CD8-positive, alpha-beta memory T cell (primary cell): ENCODE measurements at regions of chr17 and their contacts with region 1.

Region 1: DNA sequence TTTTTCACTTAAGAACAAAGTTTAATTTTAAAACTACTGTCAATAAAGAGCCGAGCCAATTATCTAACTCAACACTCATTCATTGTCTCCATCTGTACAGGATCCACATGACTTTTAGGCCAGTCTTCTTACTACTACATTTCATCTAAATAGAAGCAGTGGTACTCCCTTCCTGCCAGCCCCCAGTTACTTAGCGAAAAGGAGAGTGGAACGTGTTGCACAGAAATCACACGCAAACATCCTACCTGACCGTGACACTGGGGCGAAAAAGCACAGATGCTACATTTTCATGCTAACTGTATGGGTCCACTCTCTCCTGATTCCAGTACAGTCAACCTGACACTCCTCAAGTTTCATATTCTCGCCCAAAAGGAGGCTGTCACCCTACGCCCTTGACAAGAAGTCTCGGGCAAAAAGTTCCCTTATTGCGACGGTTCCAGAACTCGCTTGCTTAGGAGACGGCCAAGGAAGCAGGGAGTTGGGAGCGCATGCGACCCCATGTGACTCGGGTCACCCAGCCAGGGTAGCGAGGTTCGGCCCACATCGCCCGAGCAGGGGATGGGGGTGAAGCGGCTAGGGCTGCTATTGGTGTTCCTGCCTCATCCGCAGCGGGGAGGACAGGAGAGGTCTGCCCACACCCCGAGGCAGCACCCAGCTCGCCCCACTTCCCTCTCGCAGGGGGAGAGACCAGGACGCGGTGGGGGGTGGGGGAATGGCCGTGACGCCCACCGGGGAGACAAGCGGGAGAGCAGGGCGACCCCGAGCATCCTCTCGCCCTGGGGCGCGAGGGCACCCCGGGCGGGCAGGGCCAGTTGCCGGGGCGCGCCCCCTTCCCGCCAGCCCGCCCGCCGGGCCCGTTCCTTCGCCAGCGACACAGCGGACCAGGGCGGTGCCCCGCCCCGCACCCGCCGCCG is 935 bp downstream of the GNA13 start:
- DNase-seq: peak; percentile 29 to 68 (median 44)
- H3K4me3 ChIP-seq: peak overlapping the region; percentile 85
- H3K4me3 Mint-ChIP-seq: peak overlapping the region; percentile 94 to 99 (median 98)
- H3K27ac ChIP-seq: peak overlapping the region; percentile 90
- H3K27ac Mint-ChIP-seq: peak overlapping the region; percentile 92 to 100 (median 97)
- H3K4me1 ChIP-seq: peaks cover 31% of the 10 kb centered on the region
- H3K4me1 Mint-ChIP-seq: peaks cover 46 to 59% (median 56%) of the 10 kb centered on the region in 3 donors
- H3K27me3 ChIP-seq: no peaks in the 10 kb centered on the region
- H3K27me3 Mint-ChIP-seq: peaks cover 0 to 2% of the 10 kb centered on the region in 2 donors

Region 2: GRCh38 chr17:64975329-64976087 is 80.1 kb before region 1 on chr17:
- CTCF ChIA-PET with region 1: interaction called, 9 read pairs
- POLR2A ChIA-PET with region 1: interaction called, 29 read pairs
- DNase-seq: peak; percentile 96 to 99 (median 98)
- H3K4me3 ChIP-seq: peak overlapping the region; percentile 82
- H3K4me3 Mint-ChIP-seq: peak overlapping the region; percentile 86 to 96 (median 92)
- H3K27ac ChIP-seq: peak overlapping the region; percentile 96
- H3K27ac Mint-ChIP-seq: peak overlapping the region; percentile 97 to 100 (median 100)
- H3K4me1 ChIP-seq: peaks cover 23% of the 10 kb centered on the region
- H3K4me1 Mint-ChIP-seq: peaks cover 35 to 65% (median 56%) of the 10 kb centered on the region in 3 donors
- H3K27me3 ChIP-seq: no peaks in the 10 kb centered on the region
- H3K27me3 Mint-ChIP-seq: peaks cover 0 to 4% of the 10 kb centered on the region in 2 donors

Region 3: DNA sequence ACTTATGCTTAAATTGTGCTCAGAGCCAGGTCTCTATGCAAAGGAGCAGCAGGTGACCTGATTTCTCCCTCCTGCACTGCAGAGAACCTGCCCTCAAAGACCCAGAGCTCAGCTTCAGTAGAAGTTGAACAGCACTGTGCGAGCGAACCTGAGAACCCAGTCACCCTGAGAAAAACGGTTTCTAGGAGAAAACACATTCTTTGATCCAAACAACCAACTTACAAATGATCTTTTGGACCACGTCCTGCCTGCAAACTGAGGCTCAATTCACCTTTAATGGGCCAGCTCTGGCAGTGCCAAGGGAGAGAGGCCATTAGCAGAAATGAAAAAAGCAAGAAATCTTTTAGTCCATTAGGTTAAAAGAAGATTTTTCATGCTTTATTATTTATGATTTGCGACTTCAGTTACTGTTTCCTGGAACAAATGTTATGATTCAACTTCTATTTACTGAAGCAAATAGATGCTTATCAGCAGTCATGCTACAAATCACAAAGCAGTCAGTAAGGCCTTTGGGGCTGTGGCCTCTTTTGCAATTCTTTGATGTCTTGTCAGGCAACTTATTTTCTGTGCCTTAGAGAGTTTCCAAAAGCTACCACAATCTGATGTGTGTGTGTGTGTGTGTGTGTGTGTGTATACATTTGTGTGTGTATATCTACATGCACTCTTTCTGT is 70.6 kb before region 1 on chr17:
- CTCF ChIA-PET with region 1: no interaction called
- POLR2A ChIA-PET with region 1: interaction called, 14 read pairs
- DNase-seq: peak; percentile 32 to 82 (median 64)
- H3K4me3 ChIP-seq: peak overlapping the region; percentile 60
- H3K4me3 Mint-ChIP-seq: peak overlapping the region; percentile 39 to 89 (median 80)
- H3K27ac ChIP-seq: peak overlapping the region; percentile 95
- H3K27ac Mint-ChIP-seq: peak overlapping the region; percentile 98 to 100 (median 99)
- H3K4me1 ChIP-seq: peaks cover 39% of the 10 kb centered on the region
- H3K4me1 Mint-ChIP-seq: peaks cover 34 to 48% (median 43%) of the 10 kb centered on the region in 3 donors
- H3K27me3 ChIP-seq: no peaks in the 10 kb centered on the region
- H3K27me3 Mint-ChIP-seq: peaks cover 0 to 1% of the 10 kb centered on the region in 2 donors

Region 4: DNA sequence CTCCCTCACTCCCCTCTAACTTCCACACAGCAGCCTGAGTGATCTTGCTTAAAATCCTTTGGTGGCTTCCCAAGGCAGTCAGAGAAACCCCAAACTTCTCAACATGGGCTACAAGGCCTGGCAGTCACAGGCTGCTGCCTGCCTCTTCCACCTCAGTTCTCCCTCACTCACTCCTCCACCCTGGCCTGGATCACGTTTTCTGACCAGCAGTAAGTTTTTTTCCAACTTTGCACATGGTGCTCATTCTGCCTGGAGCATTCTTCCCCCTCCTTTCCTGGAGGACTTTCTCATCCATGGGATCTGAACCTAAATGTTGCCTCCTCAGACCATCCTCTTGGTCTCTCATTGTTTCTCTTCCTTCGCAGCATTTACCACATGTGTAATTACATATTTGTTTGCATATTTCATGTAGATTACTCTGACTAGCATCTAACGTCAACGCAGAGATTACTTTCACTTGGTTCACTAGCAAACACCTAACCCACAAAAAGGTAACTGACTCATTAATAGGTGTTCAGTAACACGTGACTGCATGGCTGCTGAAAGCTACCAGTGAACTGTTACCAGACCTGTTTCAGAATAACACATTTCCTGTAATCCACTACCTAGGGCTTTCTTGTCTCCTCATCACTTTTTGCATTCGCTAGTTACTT is 16.1 kb before region 1 on chr17:
- CTCF ChIA-PET with region 1: interaction called, 6 read pairs
- POLR2A ChIA-PET with region 1: interaction called, 20 read pairs
- DNase-seq: peak in 4 of 5 donors; percentile 50 to 82 (median 78)
- H3K4me3 ChIP-seq: peak overlapping the region; percentile 42
- H3K4me3 Mint-ChIP-seq: peak overlapping the region; percentile 31 to 88 (median 75)
- H3K27ac ChIP-seq: peak overlapping the region; percentile 49
- H3K27ac Mint-ChIP-seq: peak overlapping the region; percentile 87 to 99 (median 94)
- H3K4me1 ChIP-seq: peaks cover 91% of the 10 kb centered on the region
- H3K4me1 Mint-ChIP-seq: peaks cover 80 to 91% (median 90%) of the 10 kb centered on the region in 3 donors
- H3K27me3 ChIP-seq: no peaks in the 10 kb centered on the region
- H3K27me3 Mint-ChIP-seq: peaks cover 0 to 3% of the 10 kb centered on the region in 2 donors

Region 5: DNA sequence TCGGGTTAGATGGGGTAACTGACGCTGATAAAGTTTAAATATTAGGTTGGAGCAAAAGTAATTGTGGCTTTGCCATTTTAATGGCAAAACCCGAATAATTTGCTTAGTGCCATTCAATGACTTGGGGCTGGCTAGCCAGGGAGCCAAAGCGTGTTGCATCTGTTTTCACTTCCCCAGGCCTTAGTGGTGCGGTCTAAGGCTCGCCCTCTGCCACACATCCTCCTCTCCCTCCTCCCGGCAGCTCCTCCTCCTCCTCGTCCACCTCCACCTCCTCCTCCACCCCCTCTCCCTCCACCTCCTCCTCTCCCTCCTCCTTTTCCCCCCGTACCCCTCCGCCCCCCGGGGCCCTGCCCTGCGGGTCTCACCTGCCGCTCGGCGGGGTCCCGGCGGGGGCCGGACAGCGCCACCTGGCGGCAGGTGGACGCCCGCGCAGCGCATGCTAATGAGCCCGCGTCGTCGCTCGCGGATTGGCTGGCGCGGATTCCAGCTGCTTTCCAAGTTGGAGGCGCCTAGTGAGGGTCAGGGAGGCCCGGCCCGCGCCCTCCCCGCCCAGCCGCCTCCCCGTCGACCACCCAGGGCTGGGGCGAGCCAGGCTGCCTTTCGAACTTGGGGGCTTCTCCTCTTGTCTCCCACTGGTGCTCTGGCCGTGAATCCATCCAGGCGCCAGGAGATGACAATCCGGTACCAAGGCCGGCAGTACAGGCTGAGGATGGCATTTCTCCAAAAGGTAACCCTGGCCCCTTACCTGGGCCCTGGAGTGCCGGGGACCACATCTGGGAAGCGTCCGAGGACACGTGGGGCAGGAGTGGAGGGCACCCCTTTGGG is 44.9 kb after region 1 on chr17:
- CTCF ChIA-PET with region 1: interaction called, 15 read pairs
- POLR2A ChIA-PET with region 1: interaction called, 11 read pairs
- DNase-seq: peak; percentile 79 to 88 (median 82)
- H3K4me3 ChIP-seq: peak overlapping the region; percentile 95
- H3K4me3 Mint-ChIP-seq: peak overlapping the region; percentile 87 to 92 (median 90)
- H3K27ac ChIP-seq: peak overlapping the region; percentile 70
- H3K27ac Mint-ChIP-seq: peak overlapping the region; percentile 75 to 96 (median 90)
- H3K4me1 ChIP-seq: peaks cover 11% of the 10 kb centered on the region
- H3K4me1 Mint-ChIP-seq: peaks cover 16 to 30% (median 21%) of the 10 kb centered on the region in 3 donors
- H3K27me3 ChIP-seq: no peaks in the 10 kb centered on the region
- H3K27me3 Mint-ChIP-seq: peaks cover 0 to under 1% of the 10 kb centered on the region in 2 donors

Region 6: DNA sequence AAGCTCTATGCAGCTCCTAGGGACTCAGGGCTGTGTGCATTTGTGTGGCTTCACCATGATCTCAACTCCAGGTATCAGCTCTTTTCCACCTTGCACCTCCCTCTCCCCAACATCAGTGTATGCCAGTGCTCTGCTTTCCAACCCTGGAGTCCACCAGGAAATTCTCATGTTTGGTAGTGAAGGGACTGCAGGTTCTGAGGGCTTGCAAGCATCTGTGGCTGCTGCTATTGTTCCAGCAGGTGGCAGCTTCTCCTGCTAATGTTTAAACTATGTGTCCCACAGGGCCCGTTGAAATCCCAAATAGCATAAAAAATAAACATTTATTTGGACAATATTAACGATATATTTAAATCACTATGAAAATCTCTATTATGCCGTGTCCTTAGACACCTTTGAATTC is 163.5 kb after region 1 on chr17:
- CTCF ChIA-PET with region 1: no interaction called
- POLR2A ChIA-PET with region 1: no interaction called
- DNase-seq: no peak
- H3K4me3 ChIP-seq: no peak overlapping the region
- H3K4me3 Mint-ChIP-seq: no peak overlapping the region
- H3K27ac ChIP-seq: no peak overlapping the region
- H3K27ac Mint-ChIP-seq: no peak overlapping the region
- H3K4me1 ChIP-seq: no peaks in the 10 kb centered on the region
- H3K4me1 Mint-ChIP-seq: no peaks in the 10 kb centered on the region
- H3K27me3 ChIP-seq: no peaks in the 10 kb centered on the region
- H3K27me3 Mint-ChIP-seq: peaks cover 8 to 12% of the 10 kb centered on the region in 2 donors